T-cell (primary cell): ENCODE measurements at regions of chr3 and their contacts with region 1.

Region 1: GRCh38 chr3:186849374-186849975 is 7.0 kb downstream of the ADIPOQ start:
- DNase-seq: peak in 4 of 35 experiments; percentile 11 to 76 (median 20)
- ATAC-seq: peak; percentile 86 to 98 (median 95)
- H3K4me3 ChIP-seq: no peak overlapping the region
- H3K4me3 Mint-ChIP-seq: no peak overlapping the region
- H3K27ac ChIP-seq: no peak overlapping the region
- H3K27ac Mint-ChIP-seq: peak overlapping the region; percentile 60 to 72
- H3K4me1 ChIP-seq: peaks cover 0 to 4% of the 10 kb centered on the region in 2 experiments
- H3K4me1 Mint-ChIP-seq: peaks cover 11 to 22% (median 18%) of the 10 kb centered on the region in 3 donors
- H3K27me3 ChIP-seq: peaks cover 0 to 8% of the 10 kb centered on the region in 2 experiments
- H3K27me3 Mint-ChIP-seq: peaks cover 3 to 8% of the 10 kb centered on the region in 2 donors

Region 2: DNA sequence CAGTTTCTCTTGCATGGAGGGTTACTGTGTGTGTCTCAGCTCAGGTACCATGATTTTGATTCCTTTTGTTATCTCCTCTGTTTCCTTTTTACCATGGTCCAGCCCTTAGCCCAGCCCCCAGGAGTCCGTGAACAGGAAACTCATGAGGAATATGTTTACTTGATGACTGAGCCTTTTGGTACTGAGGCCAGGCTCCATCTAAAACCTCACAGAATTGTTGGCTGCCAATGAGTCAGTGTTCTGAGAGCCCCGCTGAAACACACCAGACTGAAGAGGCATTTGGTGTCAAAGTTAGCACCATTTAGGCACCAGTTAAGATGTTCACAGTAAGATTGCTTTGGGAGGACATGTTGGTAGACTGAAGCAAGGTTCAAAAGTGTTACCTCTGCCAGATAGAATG is 568.3 kb before region 1 on chr3:
- CTCF ChIA-PET with region 1: no interaction called
- POLR2A ChIA-PET with region 1: no interaction called
- DNase-seq: no peak
- ATAC-seq: no peak
- H3K4me3 ChIP-seq: no peak overlapping the region
- H3K4me3 Mint-ChIP-seq: no peak overlapping the region
- H3K27ac ChIP-seq: no peak overlapping the region
- H3K27ac Mint-ChIP-seq: no peak overlapping the region
- H3K4me1 ChIP-seq: no peaks in the 10 kb centered on the region
- H3K4me1 Mint-ChIP-seq: no peaks in the 10 kb centered on the region
- H3K27me3 ChIP-seq: no peaks in the 10 kb centered on the region
- H3K27me3 Mint-ChIP-seq: peaks cover 3 to 7% of the 10 kb centered on the region in 2 donors

Region 3: DNA sequence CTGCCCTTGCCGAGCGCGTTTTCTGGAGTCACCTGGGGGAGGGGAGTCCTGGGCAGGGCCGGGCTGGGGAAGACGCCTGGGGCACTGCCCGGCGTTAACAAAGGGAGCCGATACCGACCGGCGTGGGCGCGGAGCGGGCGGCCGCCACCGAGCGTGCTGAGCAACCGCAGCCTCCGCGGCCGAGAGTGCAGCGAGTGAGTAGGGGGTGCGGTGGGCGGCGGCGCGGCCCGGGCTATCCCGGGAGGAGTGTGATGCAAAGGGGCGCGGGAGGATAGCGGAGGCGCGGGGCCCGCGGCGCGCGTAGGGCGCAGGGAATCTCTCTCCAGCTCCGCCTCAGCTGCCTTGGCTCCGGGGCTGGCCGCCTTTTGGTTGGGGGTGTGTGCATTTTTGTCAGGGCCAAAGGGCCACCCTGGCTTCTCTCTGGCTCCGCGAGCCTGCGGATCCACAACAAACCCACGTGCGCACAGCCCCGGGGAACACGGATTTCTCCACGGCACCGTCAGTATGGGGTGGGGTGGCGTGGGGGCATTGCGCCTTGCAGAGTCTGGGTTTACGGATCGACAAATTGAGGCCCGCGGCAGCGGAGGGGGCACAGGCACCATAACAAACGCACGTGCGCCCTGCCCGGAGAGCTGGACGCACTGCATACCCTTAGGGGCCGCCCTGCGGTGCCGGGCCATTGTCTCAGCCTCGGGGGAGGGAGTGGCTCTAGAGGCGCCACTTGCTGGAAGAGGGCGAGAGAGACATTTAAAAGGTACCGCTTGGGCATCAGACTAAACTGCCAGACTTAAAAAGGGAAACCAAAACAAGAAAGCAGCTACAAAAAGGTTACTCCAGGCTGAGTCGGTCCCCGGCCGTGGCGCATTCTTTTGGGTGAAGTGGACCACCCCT is 81.4 kb after region 1 on chr3:
- CTCF ChIA-PET with region 1: interaction called, 17 to 34 read pairs
- POLR2A ChIA-PET with region 1: no interaction called
- DNase-seq: peak; percentile 43 to 82 (median 61)
- ATAC-seq: peak; percentile 74 to 82 (median 75)
- H3K4me3 ChIP-seq: peak overlapping the region; percentile 81 to 98
- H3K4me3 Mint-ChIP-seq: peak overlapping the region; percentile 92 to 99 (median 99)
- H3K27ac ChIP-seq: peak overlapping the region; percentile 80
- H3K27ac Mint-ChIP-seq: peak overlapping the region; percentile 97 to 98
- H3K4me1 ChIP-seq: peaks cover 7 to 32% of the 10 kb centered on the region in 2 experiments
- H3K4me1 Mint-ChIP-seq: peaks cover 40 to 45% (median 40%) of the 10 kb centered on the region in 3 donors
- H3K27me3 ChIP-seq: no peaks in the 10 kb centered on the region
- H3K27me3 Mint-ChIP-seq: no peaks in the 10 kb centered on the region

Region 4: DNA sequence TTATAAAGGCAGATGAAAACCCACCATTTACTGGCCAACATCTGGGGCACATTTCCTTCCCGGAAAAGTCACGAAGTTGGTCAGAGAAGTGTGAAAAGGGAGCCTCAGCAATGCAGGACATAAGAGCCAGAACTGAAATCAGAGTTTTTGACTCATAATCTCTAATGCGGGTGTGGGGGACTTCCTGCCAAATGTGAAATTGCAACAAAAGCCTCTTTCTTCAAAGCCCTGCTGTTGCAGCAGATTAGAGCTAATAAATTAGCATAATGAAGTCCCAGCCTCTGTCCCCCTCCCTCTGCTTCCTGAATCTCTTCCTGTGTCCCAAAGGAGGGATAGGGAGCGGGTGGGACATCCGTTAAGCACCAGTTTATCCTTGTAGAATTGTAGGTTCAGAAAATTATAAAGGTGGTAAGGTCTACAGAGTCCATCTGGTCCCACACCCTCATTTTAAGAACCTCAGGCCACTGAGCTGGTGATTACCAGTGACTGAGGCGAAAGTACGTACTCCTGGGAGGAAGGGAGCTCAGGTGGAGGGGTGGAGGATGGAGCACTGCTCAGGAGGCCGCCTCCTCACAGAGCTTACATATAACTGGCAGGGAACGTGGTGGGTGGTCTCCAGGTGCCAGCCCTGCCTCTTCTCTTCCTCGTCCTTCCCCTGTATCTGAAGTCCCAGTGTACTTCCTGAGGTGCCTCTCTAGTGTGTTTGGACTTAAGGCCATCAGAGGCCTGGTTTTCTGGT is 115.8 kb after region 1 on chr3:
- CTCF ChIA-PET with region 1: interaction called, 4 to 10 read pairs
- POLR2A ChIA-PET with region 1: no interaction called
- DNase-seq: no peak
- ATAC-seq: no peak
- H3K4me3 ChIP-seq: no peak overlapping the region
- H3K4me3 Mint-ChIP-seq: no peak overlapping the region
- H3K27ac ChIP-seq: no peak overlapping the region
- H3K27ac Mint-ChIP-seq: peak overlapping the region; percentile 61 to 75
- H3K4me1 ChIP-seq: peaks cover 0 to 12% of the 10 kb centered on the region in 2 experiments
- H3K4me1 Mint-ChIP-seq: peaks cover 48 to 74% (median 57%) of the 10 kb centered on the region in 3 donors
- H3K27me3 ChIP-seq: no peaks in the 10 kb centered on the region
- H3K27me3 Mint-ChIP-seq: no peaks in the 10 kb centered on the region

Region 5: GRCh38 chr3:187066228-187066995 is 216.9 kb after region 1 on chr3:
- CTCF ChIA-PET with region 1: interaction called, 3 to 15 read pairs
- POLR2A ChIA-PET with region 1: no interaction called
- DNase-seq: peak in 34 of 35 experiments; percentile 15 to 75 (median 52)
- ATAC-seq: peak; percentile 66 to 79 (median 68)
- H3K4me3 ChIP-seq: no peak overlapping the region
- H3K4me3 Mint-ChIP-seq: peak overlapping the region in 1 of 3 donors; percentile 31
- H3K27ac ChIP-seq: peak overlapping the region; percentile 47
- H3K27ac Mint-ChIP-seq: peak overlapping the region; percentile 63 to 87
- H3K4me1 ChIP-seq: peaks cover 10 to 38% of the 10 kb centered on the region in 2 experiments
- H3K4me1 Mint-ChIP-seq: peaks cover 67 to 82% (median 79%) of the 10 kb centered on the region in 3 donors
- H3K27me3 ChIP-seq: no peaks in the 10 kb centered on the region
- H3K27me3 Mint-ChIP-seq: no peaks in the 10 kb centered on the region

Region 6: GRCh38 chr3:187150599-187150998 is 301.1 kb after region 1 on chr3:
- CTCF ChIA-PET with region 1: interaction called, 4 to 23 read pairs
- POLR2A ChIA-PET with region 1: no interaction called
- DNase-seq: peak; percentile 18 to 71 (median 53)
- ATAC-seq: peak in 3 of 4 experiments; percentile 45 to 58 (median 55)
- H3K4me3 ChIP-seq: no peak overlapping the region
- H3K4me3 Mint-ChIP-seq: no peak overlapping the region
- H3K27ac ChIP-seq: no peak overlapping the region
- H3K27ac Mint-ChIP-seq: peak overlapping the region; percentile 13 to 28
- H3K4me1 ChIP-seq: peaks cover 0 to 5% of the 10 kb centered on the region in 2 experiments
- H3K4me1 Mint-ChIP-seq: peaks cover 7 to 14% (median 8%) of the 10 kb centered on the region in 3 donors
- H3K27me3 ChIP-seq: peaks cover 0 to 9% of the 10 kb centered on the region in 2 experiments
- H3K27me3 Mint-ChIP-seq: peaks cover 3 to 7% of the 10 kb centered on the region in 2 donors

Region 7: GRCh38 chr3:187802928-187803259 is 953.4 kb after region 1 on chr3:
- CTCF ChIA-PET with region 1: no interaction called
- POLR2A ChIA-PET with region 1: no interaction called
- DNase-seq: peak in 25 of 35 experiments; percentile 5 to 57 (median 21)
- ATAC-seq: peak; percentile 43 to 62 (median 45)
- H3K4me3 ChIP-seq: peak overlapping the region in 1 of 2 donors; percentile 26
- H3K4me3 Mint-ChIP-seq: peak overlapping the region; percentile 16 to 77 (median 32)
- H3K27ac ChIP-seq: no peak overlapping the region
- H3K27ac Mint-ChIP-seq: peak overlapping the region; percentile 2 to 82
- H3K4me1 ChIP-seq: peaks cover 29 to 34% of the 10 kb centered on the region in 2 experiments
- H3K4me1 Mint-ChIP-seq: peaks cover 46 to 62% (median 61%) of the 10 kb centered on the region in 3 donors
- H3K27me3 ChIP-seq: no peaks in the 10 kb centered on the region
- H3K27me3 Mint-ChIP-seq: no peaks in the 10 kb centered on the region